ENCODE measurements at regions of chr19 and their contacts with region 1.

Region 1: GRCh38 chr19:55516878-55517620 is 19.9 kb downstream of the SBK2 start:
- DNase-seq: peak; percentile 94
- H3K4me3 Mint-ChIP-seq: peak overlapping the region; percentile 73
- H3K27ac Mint-ChIP-seq: peak overlapping the region; percentile 74
- H3K4me1 Mint-ChIP-seq: peaks cover 5% of the 10 kb centered on the region
- H3K27me3 Mint-ChIP-seq: peaks cover 11% of the 10 kb centered on the region
- CTCF ChIP-seq: peak; percentile 79

Region 2: DNA sequence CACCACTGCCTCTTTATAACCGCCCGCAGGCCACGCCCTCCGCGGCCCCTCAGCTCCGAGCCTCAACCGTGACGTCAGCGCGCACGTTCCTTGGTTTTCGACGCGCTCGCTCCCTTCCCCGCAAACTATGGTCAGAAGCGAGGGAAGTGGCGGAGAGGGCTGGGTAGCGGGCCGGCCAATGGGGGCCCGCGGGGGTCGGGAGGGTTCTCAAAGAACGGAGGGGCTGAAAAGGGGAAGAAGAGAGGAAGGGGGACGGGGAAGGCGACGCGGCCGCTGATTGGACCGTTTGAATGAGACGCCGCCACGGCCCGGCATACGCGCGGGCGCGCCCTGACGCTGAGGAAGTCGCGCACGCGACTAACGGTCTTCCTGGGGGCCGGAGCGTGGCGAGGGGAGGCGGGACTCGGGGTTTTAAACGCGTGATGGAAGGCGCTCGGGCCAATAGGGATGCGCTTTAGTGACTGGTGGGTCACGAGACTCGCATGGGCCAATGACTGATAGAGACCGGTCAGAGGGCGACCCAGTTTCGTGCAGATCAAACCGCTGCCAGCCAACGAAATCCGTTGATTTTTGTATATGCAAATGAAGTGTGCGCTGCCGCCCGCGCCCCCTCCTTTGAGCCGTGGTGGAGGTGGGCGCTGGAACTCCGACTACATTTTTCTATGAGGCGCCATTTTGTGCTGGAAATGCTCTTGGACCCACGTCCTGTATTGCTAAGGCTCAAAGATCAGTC is 109.1 kb before region 1 on chr19:
- CTCF ChIA-PET with region 1: no interaction called
- POLR2A ChIA-PET with region 1: no interaction called
- intact Hi-C with region 1: no loop called
- DNase-seq: peak; percentile 100
- H3K4me3 Mint-ChIP-seq: peak overlapping the region; percentile 94
- H3K27ac Mint-ChIP-seq: peak overlapping the region; percentile 99
- H3K4me1 Mint-ChIP-seq: peaks cover 21% of the 10 kb centered on the region
- H3K27me3 Mint-ChIP-seq: no peaks in the 10 kb centered on the region
- CTCF ChIP-seq: no peak

Region 3: GRCh38 chr19:55624109-55625003 is 107.3 kb after region 1 on chr19 and contains the start of gene ZNF784:
- CTCF ChIA-PET with region 1: interaction called, 122 read pairs
- POLR2A ChIA-PET with region 1: no interaction called
- intact Hi-C with region 1: no loop called
- DNase-seq: peak; percentile 93
- H3K4me3 Mint-ChIP-seq: peak within 1 kb of the TSS; percentile 91
- H3K27ac Mint-ChIP-seq: peak within 1 kb of the TSS; percentile 99
- H3K4me1 Mint-ChIP-seq: peaks cover 10% of the 10 kb centered on the region
- H3K27me3 Mint-ChIP-seq: no peaks in the 10 kb centered on the region
- CTCF ChIP-seq: no peak
- total RNA-seq, gene ZNF784: 2.7 and 3.1 TPM in 2 replicates

Measured in MCF 10A (cell line).